PC-9 (cell line): ENCODE measurements at regions of chr12 and their contacts with region 1.

Region 1: DNA sequence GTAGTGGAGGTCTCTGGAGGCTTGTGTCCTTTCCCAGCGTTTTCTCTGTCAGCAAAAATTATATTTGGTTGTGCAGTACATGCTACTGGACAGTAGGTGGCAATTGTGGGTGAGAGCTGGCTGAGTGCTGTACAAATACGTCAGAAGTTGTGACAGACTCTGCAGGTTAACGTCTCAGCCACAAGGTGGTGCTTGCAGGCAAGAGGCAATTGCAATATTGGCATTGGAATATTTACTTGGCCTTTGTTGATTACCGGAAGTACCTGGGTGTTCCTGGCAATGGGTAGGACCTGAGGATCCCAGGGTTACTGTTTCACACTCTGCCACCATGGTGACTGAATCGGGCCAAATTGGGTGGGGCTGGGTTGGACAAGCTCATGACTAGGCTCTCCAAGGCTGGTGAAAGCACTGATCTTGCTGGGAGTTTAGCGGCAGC is 333.9 kb upstream of the LMO3 start:
- DNase-seq: peak; percentile 65 to 73
- H3K4me3 ChIP-seq: no peak overlapping the region
- H3K27ac ChIP-seq: no peak overlapping the region
- H3K4me1 ChIP-seq: no peaks in the 10 kb centered on the region
- H3K27me3 ChIP-seq: no peaks in the 10 kb centered on the region
- CTCF ChIP-seq: peak; percentile 91

Region 2: GRCh38 chr12:16165506-16165905 is 774.4 kb before region 1 on chr12:
- CTCF ChIA-PET with region 1: interaction called, 7 read pairs
- POLR2A ChIA-PET with region 1: no interaction called
- intact Hi-C with region 1: loop called (anchors 2 kb)
- DNase-seq: peak in 1 of 2 experiments; percentile 53
- H3K4me3 ChIP-seq: no peak overlapping the region
- H3K27ac ChIP-seq: no peak overlapping the region
- H3K4me1 ChIP-seq: no peaks in the 10 kb centered on the region
- H3K27me3 ChIP-seq: no peaks in the 10 kb centered on the region
- CTCF ChIP-seq: peak; percentile 80

Region 3: GRCh38 chr12:16984484-16984883 is 44.6 kb after region 1 on chr12:
- CTCF ChIA-PET with region 1: no interaction called
- POLR2A ChIA-PET with region 1: no interaction called
- intact Hi-C with region 1: no loop called
- DNase-seq: no peak
- H3K4me3 ChIP-seq: no peak overlapping the region
- H3K27ac ChIP-seq: no peak overlapping the region
- H3K4me1 ChIP-seq: no peaks in the 10 kb centered on the region
- H3K27me3 ChIP-seq: no peaks in the 10 kb centered on the region
- CTCF ChIP-seq: no peak

Region 4: DNA sequence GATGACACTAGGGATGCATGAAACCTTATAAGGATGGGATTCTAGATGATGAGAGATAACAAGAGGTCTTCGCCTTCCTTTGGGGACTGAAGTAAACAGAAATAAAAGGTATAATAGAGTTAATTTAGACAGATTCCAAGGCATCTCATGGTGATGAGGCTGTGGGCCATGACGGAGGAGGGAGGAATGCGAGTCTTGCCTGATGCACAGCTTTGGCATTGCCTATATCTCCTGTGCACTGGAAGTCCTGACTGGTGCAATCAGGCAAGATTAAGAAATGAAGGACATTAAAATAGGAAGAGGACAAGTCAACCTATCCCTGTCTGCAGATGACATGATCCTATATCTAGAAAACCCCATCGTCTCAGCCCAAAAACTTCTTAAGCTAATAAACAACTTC is 192.4 kb after region 1 on chr12:
- CTCF ChIA-PET with region 1: no interaction called
- POLR2A ChIA-PET with region 1: no interaction called
- intact Hi-C with region 1: no loop called
- DNase-seq: no peak
- H3K4me3 ChIP-seq: no peak overlapping the region
- H3K27ac ChIP-seq: no peak overlapping the region
- H3K4me1 ChIP-seq: no peaks in the 10 kb centered on the region
- H3K27me3 ChIP-seq: no peaks in the 10 kb centered on the region
- CTCF ChIP-seq: no peak

Region 5: DNA sequence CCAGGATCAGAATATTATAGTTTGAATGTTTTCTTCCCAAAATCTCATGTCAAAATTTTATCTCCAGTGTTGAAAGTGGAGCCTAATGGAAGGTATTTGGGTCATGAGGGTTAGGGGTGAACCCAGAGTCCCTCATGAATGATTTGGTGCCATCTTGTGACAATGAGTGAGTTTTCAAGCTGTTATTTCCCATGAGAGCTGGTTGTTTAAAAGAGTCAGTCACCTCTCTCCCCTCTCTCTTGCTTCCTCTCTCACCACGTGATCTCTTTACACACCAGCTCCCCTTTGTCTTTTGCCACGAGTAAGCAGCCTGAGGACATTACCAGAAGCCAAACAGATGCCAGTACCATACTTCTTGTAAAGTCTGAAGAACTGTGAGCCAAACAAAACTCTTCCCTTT is 588.5 kb after region 1 on chr12:
- CTCF ChIA-PET with region 1: no interaction called
- POLR2A ChIA-PET with region 1: no interaction called
- intact Hi-C with region 1: loop called (anchors 5 kb)
- DNase-seq: no peak
- H3K4me3 ChIP-seq: no peak overlapping the region
- H3K27ac ChIP-seq: no peak overlapping the region
- H3K4me1 ChIP-seq: no peaks in the 10 kb centered on the region
- H3K27me3 ChIP-seq: no peaks in the 10 kb centered on the region
- CTCF ChIP-seq: no peak

Region 6: GRCh38 chr12:17642340-17642650 is 702.4 kb after region 1 on chr12:
- CTCF ChIA-PET with region 1: interaction called, 3 read pairs
- POLR2A ChIA-PET with region 1: no interaction called
- intact Hi-C with region 1: loop called (anchors 1 kb)
- DNase-seq: no peak
- H3K4me3 ChIP-seq: no peak overlapping the region
- H3K27ac ChIP-seq: no peak overlapping the region
- H3K4me1 ChIP-seq: no peaks in the 10 kb centered on the region
- H3K27me3 ChIP-seq: no peaks in the 10 kb centered on the region
- CTCF ChIP-seq: peak; percentile 16; the same call in 1 of the 2 replicates

Region 7: DNA sequence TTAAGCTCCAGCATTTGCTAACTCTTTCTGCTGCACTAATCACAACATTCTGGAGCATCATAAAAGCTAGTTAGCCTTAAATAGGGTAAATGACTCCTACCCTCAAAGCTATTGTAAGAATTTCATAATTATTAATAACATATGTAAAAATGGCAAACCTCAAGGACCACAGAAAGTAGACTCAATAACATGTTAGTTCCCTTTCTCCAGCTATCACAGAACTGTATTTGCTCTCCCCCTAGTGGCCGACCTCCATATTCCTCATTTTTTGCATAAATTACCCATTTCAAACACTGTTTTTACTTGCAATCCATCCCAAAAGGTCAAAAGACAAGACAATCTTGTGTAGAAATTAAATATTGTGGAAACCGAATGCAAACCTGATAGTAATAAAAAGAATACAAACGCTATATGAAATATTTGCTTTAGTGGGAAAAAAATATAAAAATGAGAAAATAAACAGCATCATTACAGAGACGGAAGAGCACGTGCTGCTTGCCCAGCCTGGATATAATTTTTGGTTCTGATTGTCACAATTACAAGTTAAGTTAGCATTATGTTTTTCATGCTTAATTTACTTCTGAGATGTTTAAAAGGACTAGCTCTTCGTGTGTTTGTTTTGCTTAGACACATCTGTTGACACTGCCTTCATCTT is 1052.2 kb after region 1 on chr12:
- CTCF ChIA-PET with region 1: no interaction called
- POLR2A ChIA-PET with region 1: no interaction called
- intact Hi-C with region 1: loop called (anchors 1 kb)
- DNase-seq: peak in 1 of 2 experiments; percentile 39
- H3K4me3 ChIP-seq: no peak overlapping the region
- H3K27ac ChIP-seq: no peak overlapping the region
- H3K4me1 ChIP-seq: no peaks in the 10 kb centered on the region
- H3K27me3 ChIP-seq: no peaks in the 10 kb centered on the region
- CTCF ChIP-seq: peak; percentile 87